ENCODE measurements at regions of chr5 and their contacts with region 1.

Region 1: DNA sequence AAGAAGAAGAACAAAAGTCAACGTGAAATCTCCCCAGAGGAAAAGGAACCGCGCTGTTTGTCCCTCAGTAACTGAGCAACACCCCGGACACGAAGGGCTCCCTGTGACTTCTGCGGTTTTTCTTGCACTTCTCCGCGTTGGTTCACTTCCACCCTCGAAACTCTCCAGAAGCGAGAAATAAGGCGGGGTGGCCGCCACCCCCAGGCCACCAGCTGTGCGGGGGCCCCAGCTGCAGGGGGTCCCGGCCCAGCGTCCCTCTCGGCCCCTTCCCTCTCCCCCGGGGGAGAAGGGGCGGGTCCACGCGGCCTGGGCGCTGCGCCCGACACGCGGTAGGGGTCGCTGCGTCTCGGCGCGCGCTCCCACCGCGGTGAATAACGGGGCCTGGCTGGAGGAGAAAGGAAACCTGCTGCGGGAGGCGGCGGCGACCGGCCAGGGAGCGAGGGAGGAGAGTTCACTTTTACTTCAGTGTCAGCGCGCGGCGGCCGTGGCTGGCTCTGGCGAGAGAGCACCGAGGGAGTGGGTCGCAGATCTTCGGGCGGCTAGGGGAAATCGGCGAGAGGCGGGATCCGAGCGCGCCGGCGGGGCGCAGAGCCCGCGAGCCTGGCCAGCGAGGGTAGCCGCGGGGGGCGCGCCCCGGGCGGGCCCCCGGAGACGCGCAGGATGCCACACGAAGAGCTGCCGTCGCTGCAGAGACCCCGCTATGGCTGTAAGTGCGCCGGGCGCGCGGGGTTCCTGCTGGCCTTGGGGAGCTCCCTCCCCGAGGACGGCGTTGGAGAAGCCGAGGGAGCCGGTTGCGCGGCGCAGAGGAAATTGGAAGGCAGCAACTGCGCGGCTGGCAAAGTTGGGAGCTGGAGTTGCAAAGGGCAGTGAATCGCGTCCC is at the start of gene IQGAP2:
- DNase-seq: peak; percentile 93
- ATAC-seq: peak; percentile 58
- H3K4me3 Mint-ChIP-seq: peak within 1 kb of the TSS; percentile 97
- H3K27ac Mint-ChIP-seq: peak within 1 kb of the TSS; percentile 99
- H3K4me1 Mint-ChIP-seq: peaks cover 48% of the 10 kb centered on the region
- H3K27me3 Mint-ChIP-seq: peaks cover 9% of the 10 kb centered on the region
- total RNA-seq, gene IQGAP2: 62.7 to 74.9 TPM

Region 2: DNA sequence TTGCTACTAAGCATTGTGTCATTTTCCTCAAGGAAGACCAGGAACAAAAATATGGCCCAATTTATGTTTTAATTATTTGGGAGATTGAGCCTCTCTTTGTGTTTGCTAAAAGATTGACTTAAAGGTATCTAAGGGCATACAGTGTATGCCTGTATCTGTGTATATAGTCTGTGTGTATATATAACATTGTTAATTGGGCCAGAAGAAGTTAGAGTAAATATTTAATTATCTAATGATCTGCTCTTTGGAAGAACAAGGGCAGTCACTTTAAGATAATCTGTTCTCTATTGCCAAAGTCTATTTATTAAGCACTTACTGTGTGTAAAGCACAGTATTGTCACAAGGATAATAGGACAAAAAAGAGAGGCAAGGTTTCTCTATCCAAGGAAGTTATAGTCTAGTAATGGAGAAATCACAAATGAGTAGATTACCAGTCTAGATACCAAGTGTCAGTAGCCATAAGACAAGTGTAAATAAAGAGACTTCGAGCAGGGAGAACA is 268.5 kb before region 1 on chr5:
- POLR2A ChIA-PET with region 1: no interaction called
- DNase-seq: no peak
- ATAC-seq: no peak
- H3K4me3 Mint-ChIP-seq: no peak overlapping the region
- H3K27ac Mint-ChIP-seq: no peak overlapping the region
- H3K4me1 Mint-ChIP-seq: no peaks in the 10 kb centered on the region
- H3K27me3 Mint-ChIP-seq: peaks cover 52% of the 10 kb centered on the region

Region 3: DNA sequence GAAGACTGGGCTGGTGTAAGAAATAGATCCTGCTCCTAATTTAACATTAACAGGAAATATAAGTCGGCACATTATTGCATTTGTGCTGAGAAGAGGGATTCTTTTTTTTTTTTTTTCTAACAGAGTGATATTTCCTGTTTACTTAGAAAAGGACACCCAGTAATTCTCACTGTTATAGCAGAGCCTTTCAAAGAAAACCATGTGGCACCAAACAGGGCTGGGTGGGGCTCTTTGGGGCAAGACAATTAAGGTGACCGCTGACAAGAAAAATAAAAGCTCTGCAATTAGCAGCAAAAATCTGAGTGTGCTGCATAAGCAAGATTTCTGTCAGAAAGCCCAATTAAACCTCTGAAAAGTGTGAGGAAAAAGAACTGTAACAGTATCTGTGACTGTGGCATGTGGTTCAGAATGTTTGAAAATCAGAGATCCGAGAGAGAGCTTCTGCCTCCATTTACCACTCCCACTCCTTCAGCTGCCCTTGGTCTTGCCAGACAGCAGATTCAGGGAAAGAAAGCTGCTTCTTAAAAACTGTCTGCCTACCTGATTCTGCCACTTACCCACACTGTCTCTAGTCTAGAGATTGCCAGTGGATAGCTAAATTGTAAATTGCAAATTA is 77.1 kb before region 1 on chr5:
- POLR2A ChIA-PET with region 1: interaction called, 38 read pairs
- DNase-seq: peak; percentile 42
- ATAC-seq: peak; percentile 98
- H3K4me3 Mint-ChIP-seq: peak overlapping the region; percentile 64
- H3K27ac Mint-ChIP-seq: peak overlapping the region; percentile 88
- H3K4me1 Mint-ChIP-seq: peaks cover 42% of the 10 kb centered on the region
- H3K27me3 Mint-ChIP-seq: peaks cover 2% of the 10 kb centered on the region

Region 4: DNA sequence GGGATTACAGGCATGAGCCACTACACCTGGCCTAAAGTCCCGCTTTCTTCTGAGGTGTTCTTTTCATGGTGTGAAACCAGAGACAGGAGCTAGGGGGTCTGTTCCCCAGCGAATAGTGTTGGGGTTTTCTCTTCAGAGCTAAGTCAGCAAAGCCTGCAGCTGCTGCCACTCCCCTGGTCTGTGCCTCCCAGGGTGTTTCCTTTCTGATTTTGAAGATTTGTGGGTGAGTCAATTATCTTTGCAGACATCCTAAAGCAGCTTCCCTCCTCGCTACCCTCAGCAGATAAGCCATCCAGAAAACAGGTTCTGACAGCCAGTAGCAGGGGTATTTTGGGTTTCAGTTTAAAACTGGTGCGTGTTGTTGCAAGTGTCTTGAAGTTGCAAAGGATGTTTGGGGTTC is 72.0 kb before region 1 on chr5:
- POLR2A ChIA-PET with region 1: interaction called, 38 read pairs
- DNase-seq: peak; percentile 35
- ATAC-seq: peak; percentile 82
- H3K4me3 Mint-ChIP-seq: peak overlapping the region; percentile 56
- H3K27ac Mint-ChIP-seq: peak overlapping the region; percentile 75
- H3K4me1 Mint-ChIP-seq: peaks cover 36% of the 10 kb centered on the region
- H3K27me3 Mint-ChIP-seq: no peaks in the 10 kb centered on the region

Region 5: DNA sequence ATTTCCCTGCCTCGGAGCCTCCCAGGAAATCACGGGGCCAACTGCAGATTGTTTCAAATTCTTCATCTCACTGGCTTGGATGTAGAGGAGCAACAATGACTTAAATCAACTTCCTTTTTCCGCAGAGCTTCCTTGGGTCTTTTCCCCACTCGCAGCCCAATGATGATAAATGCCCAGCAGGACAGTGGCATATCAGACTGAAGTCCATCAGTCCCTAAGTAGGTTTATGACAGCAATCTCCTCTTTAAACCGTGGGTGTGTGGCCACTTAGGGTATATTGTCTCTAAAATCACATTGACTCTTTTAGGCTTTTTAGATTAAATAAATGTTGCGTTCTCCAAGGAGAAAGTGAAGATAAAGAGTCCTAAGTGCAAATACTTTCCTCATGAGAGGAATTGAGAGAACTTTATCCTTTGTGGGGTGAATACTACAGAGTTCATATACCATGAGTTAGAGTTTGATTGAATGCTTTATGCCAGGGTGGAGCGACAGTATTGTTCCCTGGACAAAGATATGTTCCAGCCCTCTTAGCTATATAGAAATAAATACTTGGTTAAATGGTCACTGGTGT is 59.1 kb after region 1 on chr5:
- POLR2A ChIA-PET with region 1: no interaction called
- DNase-seq: no peak
- ATAC-seq: no peak
- H3K4me3 Mint-ChIP-seq: no peak overlapping the region
- H3K27ac Mint-ChIP-seq: no peak overlapping the region
- H3K4me1 Mint-ChIP-seq: peaks cover 27% of the 10 kb centered on the region
- H3K27me3 Mint-ChIP-seq: no peaks in the 10 kb centered on the region

Region 6: GRCh38 chr5:76473661-76474060 is 70.5 kb after region 1 on chr5:
- POLR2A ChIA-PET with region 1: interaction called, 17 read pairs
- DNase-seq: peak; percentile 37
- ATAC-seq: peak; percentile 98
- H3K4me3 Mint-ChIP-seq: peak overlapping the region; percentile 67
- H3K27ac Mint-ChIP-seq: peak overlapping the region; percentile 91
- H3K4me1 Mint-ChIP-seq: peaks cover 34% of the 10 kb centered on the region
- H3K27me3 Mint-ChIP-seq: no peaks in the 10 kb centered on the region

Region 7: DNA sequence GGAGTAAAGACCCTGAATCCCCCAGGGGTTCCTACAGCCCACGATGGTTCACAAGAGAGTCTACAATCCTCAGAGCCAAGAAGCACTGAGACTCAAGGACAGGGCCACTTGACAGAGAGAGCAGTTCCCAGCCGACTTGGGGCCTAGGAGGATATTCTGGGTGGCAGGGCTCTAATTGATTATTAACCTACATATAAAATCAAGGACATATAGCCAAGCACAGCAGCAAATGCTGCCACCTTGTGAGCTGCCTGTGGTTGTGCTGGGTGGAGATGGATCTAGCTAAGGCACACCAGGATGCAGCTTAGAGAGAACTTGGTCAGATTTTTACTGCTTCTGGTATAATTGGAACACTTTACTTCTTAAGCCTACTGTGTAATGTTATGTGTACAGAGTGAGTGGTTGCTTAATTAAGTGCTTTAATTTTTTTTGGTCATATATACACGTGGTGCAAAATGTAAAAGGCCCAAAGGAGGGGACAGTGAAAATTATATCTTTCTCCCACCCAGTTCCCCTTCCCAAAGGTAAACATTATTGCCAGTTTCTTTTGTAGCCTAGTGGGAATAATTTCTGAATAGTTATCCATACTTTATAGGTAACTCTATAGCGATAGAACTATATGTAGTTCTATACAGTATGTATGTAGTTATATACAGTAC is 141.3 kb after region 1 on chr5:
- POLR2A ChIA-PET with region 1: interaction called, 88 read pairs
- DNase-seq: peak; percentile 48
- ATAC-seq: peak; percentile 41
- H3K4me3 Mint-ChIP-seq: peak overlapping the region; percentile 83
- H3K27ac Mint-ChIP-seq: peak overlapping the region; percentile 93
- H3K4me1 Mint-ChIP-seq: peaks cover 65% of the 10 kb centered on the region
- H3K27me3 Mint-ChIP-seq: no peaks in the 10 kb centered on the region